ENCODE measurements at regions of chr3 and their contacts with region 1.

Region 1: GRCh38 chr3:61682671-61683548 is 121.5 kb downstream of the PTPRG start:
- DNase-seq: no peak
- ATAC-seq: peak; percentile 26 to 40
- H3K4me3 ChIP-seq: no peak overlapping the region
- H3K27ac ChIP-seq: peak overlapping the region; percentile 49 to 71 (median 64)
- H3K4me1 ChIP-seq: peaks cover 44 to 49% of the 10 kb centered on the region in 2 donors
- H3K27me3 ChIP-seq: no peaks in the 10 kb centered on the region
- CTCF ChIP-seq: no peak
- POLR2A ChIP-seq: no peak

Region 2: DNA sequence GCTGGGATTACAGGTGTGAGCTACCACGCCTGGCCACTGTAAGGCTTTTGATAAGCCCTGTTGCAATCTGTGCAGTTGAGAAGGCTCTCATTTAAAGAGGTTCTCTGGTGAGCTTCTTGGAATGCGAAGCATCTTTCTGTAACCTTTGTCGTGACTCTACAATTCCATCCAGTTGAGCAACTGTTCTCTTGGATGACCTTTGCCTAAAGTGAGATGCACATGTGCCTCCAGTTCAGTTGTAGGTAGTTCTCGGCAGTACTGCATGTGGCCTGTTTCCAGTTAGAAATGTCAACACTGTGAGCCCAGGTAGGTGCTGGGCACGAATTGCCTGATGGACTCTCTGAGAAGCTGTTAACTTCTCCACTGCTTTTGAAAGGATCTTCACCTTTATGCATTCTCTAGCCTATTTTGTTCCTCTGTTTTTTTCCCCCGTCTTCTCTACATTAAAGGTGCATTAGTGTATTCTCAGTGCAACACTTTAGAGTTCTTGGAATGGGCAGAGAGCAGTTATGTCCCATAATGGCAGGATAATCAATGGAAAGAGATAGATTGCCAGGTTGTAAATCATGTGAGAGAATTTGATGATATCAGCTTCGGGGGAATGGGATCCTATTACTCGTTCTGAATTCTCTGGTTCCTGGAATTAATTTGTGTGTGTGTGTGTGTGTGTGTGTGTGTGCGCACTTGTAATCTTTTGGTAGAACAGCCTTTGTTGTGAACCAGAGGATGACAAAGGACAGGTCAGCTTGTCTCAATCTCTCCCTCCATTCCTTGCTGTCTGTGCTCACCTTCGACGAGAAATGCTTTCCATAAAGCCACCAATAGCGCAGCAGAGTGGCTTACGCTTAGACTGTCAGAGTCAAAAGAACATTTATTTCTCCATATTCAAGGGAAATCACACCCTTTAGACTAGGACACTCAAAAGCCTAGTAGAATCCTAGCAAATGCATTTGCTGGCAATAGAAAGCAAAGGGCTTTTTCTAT is 70.4 kb before region 1 on chr3:
- in situ Hi-C with region 1: no loop called
- intact Hi-C with region 1: no loop called
- DNase-seq: no peak
- ATAC-seq: peak in 1 of 2 donors; percentile 40
- H3K4me3 ChIP-seq: no peak overlapping the region
- H3K27ac ChIP-seq: peak overlapping the region in 1 of 4 donors; percentile 23
- H3K4me1 ChIP-seq: peaks cover 21 to 43% of the 10 kb centered on the region in 2 donors
- H3K27me3 ChIP-seq: no peaks in the 10 kb centered on the region
- CTCF ChIP-seq: no peak
- POLR2A ChIP-seq: no peak

Region 3: DNA sequence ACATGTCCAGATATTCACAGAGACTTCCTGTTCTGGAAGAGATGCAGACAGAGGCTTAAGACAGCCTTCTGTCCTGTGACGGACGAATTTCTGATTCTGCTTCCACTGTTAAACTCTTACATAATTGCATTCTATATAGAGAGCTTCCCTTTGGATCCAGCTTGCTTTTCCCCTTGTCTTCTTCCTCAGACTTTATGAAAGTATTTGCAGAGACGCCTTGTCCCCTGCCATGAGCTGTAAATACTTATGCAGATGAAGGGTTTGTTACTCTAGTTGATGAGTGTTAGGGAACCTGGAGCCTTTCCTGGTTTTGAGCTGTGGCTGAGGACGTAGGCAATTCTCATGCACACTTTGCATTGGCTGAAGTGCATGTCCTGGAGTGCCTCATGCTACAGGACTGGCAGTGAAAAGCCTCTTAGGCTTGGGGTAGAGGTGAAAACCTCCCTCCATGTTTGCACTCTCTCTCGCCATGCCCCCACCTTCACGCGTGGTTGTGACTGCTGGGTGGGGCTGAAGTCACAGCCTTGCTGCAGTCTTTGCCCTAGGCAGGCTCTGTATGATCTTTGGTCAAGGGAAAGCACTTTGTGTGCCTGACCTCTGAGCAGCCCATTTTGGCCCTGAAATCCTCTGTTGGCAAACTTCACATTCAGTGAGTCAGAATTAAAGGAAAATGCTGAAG is 165.0 kb after region 1 on chr3:
- in situ Hi-C with region 1: no loop called
- intact Hi-C with region 1: loop called (anchors 10 kb)
- DNase-seq: peak in 1 of 2 donors; percentile 46
- ATAC-seq: peak; percentile 67 to 73
- H3K4me3 ChIP-seq: peak overlapping the region in 1 of 4 donors; percentile 15
- H3K27ac ChIP-seq: peak overlapping the region; percentile 56 to 82 (median 75)
- H3K4me1 ChIP-seq: peaks cover 35 to 46% of the 10 kb centered on the region in 2 donors
- H3K27me3 ChIP-seq: no peaks in the 10 kb centered on the region
- CTCF ChIP-seq: no peak
- POLR2A ChIP-seq: no peak